ENCODE measurements at regions of chr19 and their contacts with region 1.

Region 1: DNA sequence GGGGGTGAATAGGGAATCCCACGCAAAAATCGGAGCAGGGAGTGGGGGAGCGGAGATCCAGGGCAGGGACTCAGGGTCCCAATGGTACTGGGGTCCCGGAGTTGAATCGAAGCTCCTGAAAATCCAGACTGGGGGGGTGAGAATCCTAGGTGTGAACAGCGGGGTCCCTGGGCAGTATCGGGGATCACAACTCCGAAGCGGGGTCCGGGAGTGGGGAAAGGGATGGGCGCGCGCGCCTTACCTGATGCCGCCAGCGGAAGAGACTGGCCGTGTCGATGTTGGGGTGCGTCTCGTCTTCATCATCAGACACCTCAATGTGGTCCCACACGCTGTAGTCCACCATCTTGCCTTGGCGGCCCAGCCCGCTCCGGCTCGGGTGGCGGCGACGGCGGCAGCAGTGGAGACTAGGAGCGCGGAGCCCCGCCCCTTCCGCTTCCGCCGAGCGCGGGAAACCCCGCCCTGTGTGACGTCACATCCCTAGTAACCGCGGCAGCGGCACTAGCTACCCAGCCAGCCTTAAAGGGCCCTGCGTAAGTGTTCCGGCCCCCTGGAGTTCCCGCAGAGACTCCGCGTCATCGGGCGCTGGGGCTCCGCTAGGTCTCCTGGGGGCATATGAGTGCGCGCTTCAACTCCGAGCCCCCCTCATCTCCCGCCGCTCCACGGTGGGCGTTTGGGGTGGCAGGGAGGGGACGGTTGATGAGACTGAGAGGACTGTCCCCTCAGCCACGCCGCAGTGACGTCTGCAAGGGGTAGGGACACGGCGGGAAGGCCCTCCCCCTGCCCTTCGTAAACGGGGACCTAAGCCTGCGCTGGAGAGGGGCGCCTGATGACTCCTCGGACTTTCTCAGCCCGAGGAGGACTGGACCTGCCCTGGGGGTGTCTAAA is at the start of gene CDC37:
- DNase-seq: peak; percentile 94 to 96
- H3K4me3 ChIP-seq: peak within 1 kb of the TSS; percentile 99
- H3K4me3 Mint-ChIP-seq: peak within 1 kb of the TSS; percentile 93
- H3K27ac Mint-ChIP-seq: peak within 1 kb of the TSS; percentile 97
- H3K4me1 ChIP-seq: no peaks in the 10 kb centered on the region
- H3K4me1 Mint-ChIP-seq: no peaks in the 10 kb centered on the region
- H3K27me3 ChIP-seq: no peaks in the 10 kb centered on the region
- H3K27me3 Mint-ChIP-seq: peaks cover 8% of the 10 kb centered on the region
- CTCF ChIP-seq: no peak
- total RNA-seq, gene CDC37: 154 and 164 TPM in 2 replicates

Region 2: GRCh38 chr19:10251792-10252694 is 151.3 kb before region 1 on chr19 and contains the start of gene MRPL4:
- CTCF ChIA-PET with region 1: no interaction called
- POLR2A ChIA-PET with region 1: no interaction called
- intact Hi-C with region 1: no loop called
- DNase-seq: peak; percentile 95 to 97
- H3K4me3 ChIP-seq: peak within 1 kb of the TSS; percentile 93
- H3K4me3 Mint-ChIP-seq: peak within 1 kb of the TSS; percentile 93
- H3K27ac Mint-ChIP-seq: peak within 1 kb of the TSS; percentile 94
- H3K4me1 ChIP-seq: peaks cover 4% of the 10 kb centered on the region; the same call in 1 of the 2 replicates
- H3K4me1 Mint-ChIP-seq: no peaks in the 10 kb centered on the region
- H3K27me3 ChIP-seq: no peaks in the 10 kb centered on the region
- H3K27me3 Mint-ChIP-seq: no peaks in the 10 kb centered on the region
- CTCF ChIP-seq: no peak
- total RNA-seq, gene MRPL4: 85.9 and 87.4 TPM in 2 replicates

Region 3: GRCh38 chr19:10363789-10364281 is 39.5 kb before region 1 on chr19:
- CTCF ChIA-PET with region 1: no interaction called
- POLR2A ChIA-PET with region 1: no interaction called
- intact Hi-C with region 1: no loop called
- DNase-seq: no peak
- H3K4me3 ChIP-seq: no peak overlapping the region
- H3K4me3 Mint-ChIP-seq: no peak overlapping the region
- H3K27ac Mint-ChIP-seq: no peak overlapping the region
- H3K4me1 ChIP-seq: no peaks in the 10 kb centered on the region
- H3K4me1 Mint-ChIP-seq: peaks cover 6% of the 10 kb centered on the region
- H3K27me3 ChIP-seq: no peaks in the 10 kb centered on the region
- H3K27me3 Mint-ChIP-seq: no peaks in the 10 kb centered on the region
- CTCF ChIP-seq: no peak

Region 4: GRCh38 chr19:10416380-10417257 is 13.2 kb after region 1 on chr19:
- CTCF ChIA-PET with region 1: interaction called, 14 read pairs
- POLR2A ChIA-PET with region 1: no interaction called
- intact Hi-C with region 1: no loop called
- DNase-seq: peak; percentile 84 to 91
- H3K4me3 ChIP-seq: peak overlapping the region; percentile 47
- H3K4me3 Mint-ChIP-seq: peak overlapping the region; percentile 61
- H3K27ac Mint-ChIP-seq: peak overlapping the region; percentile 40
- H3K4me1 ChIP-seq: peaks cover 15% of the 10 kb centered on the region
- H3K4me1 Mint-ChIP-seq: peaks cover 16% of the 10 kb centered on the region
- H3K27me3 ChIP-seq: peaks cover 4% of the 10 kb centered on the region
- H3K27me3 Mint-ChIP-seq: peaks cover 23% of the 10 kb centered on the region
- CTCF ChIP-seq: peak; percentile 81 to 84

Region 5: GRCh38 chr19:10593820-10594637 is 190.7 kb after region 1 on chr19:
- CTCF ChIA-PET with region 1: no interaction called
- POLR2A ChIA-PET with region 1: no interaction called
- intact Hi-C with region 1: no loop called
- DNase-seq: peak in 1 of 2 experiments; percentile 9
- H3K4me3 ChIP-seq: no peak overlapping the region
- H3K4me3 Mint-ChIP-seq: no peak overlapping the region
- H3K27ac Mint-ChIP-seq: no peak overlapping the region
- H3K4me1 ChIP-seq: no peaks in the 10 kb centered on the region
- H3K4me1 Mint-ChIP-seq: no peaks in the 10 kb centered on the region
- H3K27me3 ChIP-seq: no peaks in the 10 kb centered on the region
- H3K27me3 Mint-ChIP-seq: no peaks in the 10 kb centered on the region
- CTCF ChIP-seq: no peak

Measured in Caco-2 (cell line).